ENCODE measurements at regions of chr6 and their contacts with region 1.

Region 1: DNA sequence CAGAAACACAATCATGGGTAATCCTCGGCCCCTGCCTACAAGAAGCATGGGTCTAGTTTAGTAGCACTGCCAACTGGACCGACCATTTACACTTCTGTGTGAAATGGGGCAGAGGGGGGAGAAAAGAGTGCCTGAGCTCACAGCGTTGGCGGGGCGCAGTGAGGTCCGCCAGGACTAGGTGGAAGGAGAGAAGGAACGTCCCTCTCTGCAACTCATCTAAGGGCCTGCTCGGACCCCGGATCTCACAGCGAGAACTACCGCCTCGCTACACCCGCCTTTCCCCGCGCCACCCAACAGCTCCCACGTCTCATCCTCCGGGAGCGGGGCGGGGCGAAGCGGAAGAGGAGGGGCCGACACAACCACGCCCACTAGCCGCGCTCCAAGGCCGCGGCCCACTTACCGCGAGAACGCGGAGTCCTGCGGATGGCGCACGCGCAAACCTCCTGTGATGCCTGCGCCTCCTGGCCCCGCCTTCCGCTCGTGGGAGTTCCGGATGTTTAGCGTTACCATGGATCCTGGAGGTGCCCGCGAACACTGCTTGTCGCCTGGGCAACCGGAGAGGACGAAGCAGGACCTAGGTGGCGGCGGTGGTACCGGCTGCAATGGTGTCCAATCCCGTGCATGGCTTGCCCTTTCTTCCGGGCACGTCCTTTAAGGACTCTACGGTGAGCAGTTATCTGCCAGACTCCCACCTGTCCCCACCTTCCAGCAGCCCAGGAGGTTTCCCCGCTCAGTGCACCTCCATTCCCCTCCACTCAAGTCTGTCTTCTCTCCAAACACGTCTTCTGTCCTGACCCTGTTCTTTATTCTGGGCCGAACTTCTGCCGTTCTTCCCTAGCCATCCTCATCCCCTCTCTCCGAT is at the start of gene EFHC1:
- DNase-seq: peak; percentile 97
- H3K4me3 ChIP-seq: peak within 1 kb of the TSS; percentile 65 to 76 (median 74)
- H3K27ac ChIP-seq: peak within 1 kb of the TSS; percentile 99
- H3K4me1 ChIP-seq: peaks cover 31% of the 10 kb centered on the region
- H3K27me3 ChIP-seq: no peaks in the 10 kb centered on the region
- CTCF ChIP-seq: no peak
- total RNA-seq, gene EFHC1: 16.3 to 17.6 TPM

Region 2: GRCh38 chr6:52503848-52504781 is 84.1 kb after region 1 on chr6:
- CTCF ChIA-PET with region 1: no interaction called
- dilution Hi-C with region 1: no loop called
- in situ Hi-C with region 1: no loop called
- intact Hi-C with region 1: loop called (anchors 1 kb)
- DNase-seq: peak; percentile 99
- H3K4me3 ChIP-seq: no peak overlapping the region
- H3K27ac ChIP-seq: peak overlapping the region; percentile 73
- H3K4me1 ChIP-seq: peaks cover 42% of the 10 kb centered on the region
- H3K27me3 ChIP-seq: no peaks in the 10 kb centered on the region
- CTCF ChIP-seq: no peak

Region 3: DNA sequence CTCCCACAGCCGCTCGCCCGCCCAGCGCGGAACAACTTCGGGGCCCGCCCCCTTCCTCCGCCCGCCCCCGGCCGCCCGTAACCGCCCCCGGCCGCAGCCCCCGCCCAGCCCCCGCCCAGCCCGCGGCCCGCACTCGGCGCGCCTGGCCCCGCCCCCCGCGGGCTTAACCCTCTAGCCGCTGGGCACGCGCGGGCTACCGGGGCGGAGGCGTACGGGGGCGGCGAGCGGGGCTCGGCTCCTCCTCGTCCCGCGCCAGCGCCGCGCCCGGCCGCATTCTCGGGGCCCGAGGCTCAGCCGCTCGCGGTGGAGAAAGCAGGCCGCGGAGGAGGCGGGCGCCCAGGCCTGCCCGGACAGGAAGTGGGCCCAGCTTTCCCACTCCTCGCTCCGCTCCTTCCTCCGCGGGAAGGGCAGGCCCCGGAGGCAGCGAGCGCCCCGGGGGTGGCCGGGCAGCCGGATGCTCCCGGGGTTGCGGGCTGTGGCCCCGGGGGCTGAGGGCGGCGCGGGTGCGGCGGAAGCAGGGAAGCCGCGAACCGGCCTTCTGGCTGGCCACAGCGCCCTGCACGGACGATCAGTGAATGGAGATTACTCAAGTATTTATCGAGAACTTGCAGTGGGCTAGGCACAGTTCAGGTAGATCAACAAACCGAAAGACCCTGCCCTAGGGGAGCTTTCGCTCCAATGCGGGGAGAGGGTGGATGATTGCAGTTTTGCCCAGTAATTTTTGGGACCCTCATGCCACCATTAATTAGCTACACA is 157.2 kb after region 1 on chr6 and contains the start of gene TRAM2:
- CTCF ChIA-PET with region 1: no interaction called
- dilution Hi-C with region 1: no loop called
- in situ Hi-C with region 1: loop called in 1 of 2 experiments (anchors 5 kb)
- intact Hi-C with region 1: loop called (anchors 2 kb)
- DNase-seq: peak; percentile 71
- H3K4me3 ChIP-seq: peak within 1 kb of the TSS; percentile 67 to 85 (median 83)
- H3K27ac ChIP-seq: peak within 1 kb of the TSS; percentile 70
- H3K4me1 ChIP-seq: peaks cover 22% of the 10 kb centered on the region
- H3K27me3 ChIP-seq: no peaks in the 10 kb centered on the region
- CTCF ChIP-seq: no peak
- total RNA-seq, gene TRAM2: 12.5 to 16.9 TPM

Region 4: GRCh38 chr6:52598123-52598823 is 178.2 kb after region 1 on chr6:
- CTCF ChIA-PET with region 1: no interaction called
- dilution Hi-C with region 1: no loop called
- in situ Hi-C with region 1: loop called in 1 of 2 experiments (anchors 10 kb)
- intact Hi-C with region 1: loop called (anchors 1 kb)
- DNase-seq: no peak
- H3K4me3 ChIP-seq: no peak overlapping the region
- H3K27ac ChIP-seq: no peak overlapping the region
- H3K4me1 ChIP-seq: peaks cover 12% of the 10 kb centered on the region
- H3K27me3 ChIP-seq: no peaks in the 10 kb centered on the region
- CTCF ChIP-seq: peak; percentile 60 to 71

Region 5: GRCh38 chr6:52995913-52996645 is 576.0 kb after region 1 on chr6:
- CTCF ChIA-PET with region 1: no interaction called
- dilution Hi-C with region 1: no loop called
- in situ Hi-C with region 1: no loop called
- intact Hi-C with region 1: loop called (anchors 2 kb)
- DNase-seq: peak; percentile 81
- H3K4me3 ChIP-seq: peak overlapping the region in 1 of 3 experiments; percentile 14
- H3K27ac ChIP-seq: no peak overlapping the region
- H3K4me1 ChIP-seq: peaks cover 17% of the 10 kb centered on the region
- H3K27me3 ChIP-seq: no peaks in the 10 kb centered on the region
- CTCF ChIP-seq: no peak